ENCODE measurements at regions of chr1 and their contacts with region 1.

Region 1: GRCh38 chr1:205396967-205397616 is 24.8 kb downstream of the LEMD1 start:
- DNase-seq: no peak
- ATAC-seq: peak; percentile 81 to 93 (median 87)
- H3K4me3 ChIP-seq: no peak overlapping the region
- H3K27ac ChIP-seq: no peak overlapping the region
- H3K4me1 ChIP-seq: no peaks in the 10 kb centered on the region
- H3K27me3 ChIP-seq: no peaks in the 10 kb centered on the region
- CTCF ChIP-seq: peak; percentile 75

Region 2: GRCh38 chr1:205325334-205325884 is 71.7 kb before region 1 on chr1:
- intact Hi-C with region 1: no loop called
- DNase-seq: no peak
- ATAC-seq: peak; percentile 50 to 57 (median 56)
- H3K4me3 ChIP-seq: no peak overlapping the region
- H3K27ac ChIP-seq: no peak overlapping the region
- H3K4me1 ChIP-seq: peaks cover 19% of the 10 kb centered on the region
- H3K27me3 ChIP-seq: no peaks in the 10 kb centered on the region
- CTCF ChIP-seq: peak; percentile 83

Region 3: DNA sequence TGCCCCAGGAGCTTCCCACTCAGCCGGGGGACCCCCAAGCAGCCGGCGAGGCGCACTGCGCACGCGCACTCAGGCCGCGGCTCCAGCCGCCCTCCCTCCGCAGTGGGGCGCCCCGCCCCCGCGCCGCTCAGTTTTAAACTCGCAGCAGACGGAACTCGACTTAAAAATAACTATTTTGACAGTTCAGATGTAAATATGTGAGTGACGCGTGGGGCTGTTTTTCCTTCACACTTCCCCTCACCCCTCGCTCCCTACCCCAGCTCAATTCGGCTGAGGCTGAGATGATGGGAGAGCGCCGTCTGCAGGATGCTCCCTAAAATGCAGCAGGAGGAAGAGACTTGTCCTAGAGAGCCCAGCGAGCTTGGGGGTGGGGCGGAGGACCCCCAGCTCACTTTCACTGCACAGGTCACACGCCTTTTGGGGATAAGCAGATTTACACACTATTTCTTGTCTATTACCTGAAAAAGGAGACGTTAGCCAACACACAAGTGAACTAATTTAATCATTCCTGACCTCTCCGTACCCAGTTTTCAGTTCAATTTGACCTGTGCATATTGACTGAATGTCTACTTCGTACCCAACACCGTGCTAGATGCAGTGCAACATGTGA is 33.7 kb after region 1 on chr1:
- intact Hi-C with region 1: loop called (anchors 2 to 5 kb)
- DNase-seq: peak; percentile 59 to 76
- ATAC-seq: peak; percentile 81 to 95 (median 88)
- H3K4me3 ChIP-seq: peak overlapping the region; percentile 75
- H3K27ac ChIP-seq: peak overlapping the region; percentile 23
- H3K4me1 ChIP-seq: peaks cover 4% of the 10 kb centered on the region
- H3K27me3 ChIP-seq: no peaks in the 10 kb centered on the region
- CTCF ChIP-seq: peak; percentile 72

Region 4: GRCh38 chr1:205485338-205486228 is 88.5 kb after region 1 on chr1:
- intact Hi-C with region 1: loop called (anchors 1 to 5 kb)
- DNase-seq: peak; percentile 39 to 65
- ATAC-seq: peak; percentile 80 to 89 (median 86)
- H3K4me3 ChIP-seq: no peak overlapping the region
- H3K27ac ChIP-seq: no peak overlapping the region
- H3K4me1 ChIP-seq: no peaks in the 10 kb centered on the region
- H3K27me3 ChIP-seq: peaks cover 0 to 27% (median 6%) of the 10 kb centered on the region in 3 donors
- CTCF ChIP-seq: peak; percentile 98